B cell (primary cell): ENCODE measurements at regions of chr7 and their contacts with region 1.

Region 1: GRCh38 chr7:4681886-4682620 is at the start of gene FOXK1:
- DNase-seq: peak; percentile 85
- ATAC-seq: peak; percentile 81
- H3K4me3 ChIP-seq: peak within 1 kb of the TSS; percentile 19 to 81 (median 74)
- H3K4me3 Mint-ChIP-seq: peak within 1 kb of the TSS; percentile 89
- H3K27ac ChIP-seq: peak within 1 kb of the TSS; percentile 91 to 95
- H3K27ac Mint-ChIP-seq: peak within 1 kb of the TSS; percentile 92
- H3K4me1 ChIP-seq: peaks cover 12 to 36% of the 10 kb centered on the region in 2 donors
- H3K4me1 Mint-ChIP-seq: peaks cover 28% of the 10 kb centered on the region
- H3K27me3 ChIP-seq: peaks cover 0 to 2% (median 0%) of the 10 kb centered on the region in 4 experiments
- H3K27me3 Mint-ChIP-seq: peaks cover 3% of the 10 kb centered on the region
- CTCF ChIP-seq: no peak
- total RNA-seq, gene FOXK1: 56.2 and 60.9 TPM in 2 replicates

Region 2: GRCh38 chr7:4610768-4611467 is 71.1 kb before region 1 on chr7:
- CTCF ChIA-PET with region 1: no interaction called
- POLR2A ChIA-PET with region 1: no interaction called
- intact Hi-C with region 1: loop called (anchors 1 kb)
- DNase-seq: peak; percentile 75
- ATAC-seq: peak; percentile 83
- H3K4me3 ChIP-seq: no peak overlapping the region
- H3K4me3 Mint-ChIP-seq: no peak overlapping the region
- H3K27ac ChIP-seq: no peak overlapping the region
- H3K27ac Mint-ChIP-seq: no peak overlapping the region
- H3K4me1 ChIP-seq: peaks cover 10 to 13% of the 10 kb centered on the region in 2 donors
- H3K4me1 Mint-ChIP-seq: peaks cover 12% of the 10 kb centered on the region
- H3K27me3 ChIP-seq: peaks cover 0 to 3% (median 0%) of the 10 kb centered on the region in 4 experiments
- H3K27me3 Mint-ChIP-seq: peaks cover 26% of the 10 kb centered on the region
- CTCF ChIP-seq: peak; percentile 90

Region 3: GRCh38 chr7:4641667-4642467 is 40.2 kb before region 1 on chr7:
- CTCF ChIA-PET with region 1: interaction called, 36 read pairs
- POLR2A ChIA-PET with region 1: interaction called, 37 read pairs
- intact Hi-C with region 1: loop called (anchors 1 kb)
- DNase-seq: peak; percentile 99
- ATAC-seq: peak; percentile 82
- H3K4me3 ChIP-seq: peak overlapping the region; percentile 57 to 83 (median 79)
- H3K4me3 Mint-ChIP-seq: peak overlapping the region; percentile 88
- H3K27ac ChIP-seq: peak overlapping the region; percentile 83 to 90
- H3K27ac Mint-ChIP-seq: peak overlapping the region; percentile 87
- H3K4me1 ChIP-seq: peaks cover 5 to 13% of the 10 kb centered on the region in 2 donors
- H3K4me1 Mint-ChIP-seq: peaks cover 11% of the 10 kb centered on the region
- H3K27me3 ChIP-seq: peaks cover 0 to 5% (median 0%) of the 10 kb centered on the region in 4 experiments
- H3K27me3 Mint-ChIP-seq: no peaks in the 10 kb centered on the region
- CTCF ChIP-seq: peak; percentile 44

Region 4: GRCh38 chr7:4712281-4713182 is 30.5 kb after region 1 on chr7:
- CTCF ChIA-PET with region 1: no interaction called
- POLR2A ChIA-PET with region 1: interaction called, 6 read pairs
- intact Hi-C with region 1: loop called (anchors 1 kb)
- DNase-seq: peak; percentile 25
- ATAC-seq: peak; percentile 73
- H3K4me3 ChIP-seq: peak overlapping the region in 2 of 5 experiments; percentile 0 to 38
- H3K4me3 Mint-ChIP-seq: peak overlapping the region; percentile 82
- H3K27ac ChIP-seq: peak overlapping the region; percentile 5 to 10
- H3K27ac Mint-ChIP-seq: peak overlapping the region; percentile 83
- H3K4me1 ChIP-seq: peaks cover 4 to 25% of the 10 kb centered on the region in 2 donors
- H3K4me1 Mint-ChIP-seq: peaks cover 55% of the 10 kb centered on the region
- H3K27me3 ChIP-seq: no peaks in the 10 kb centered on the region
- H3K27me3 Mint-ChIP-seq: no peaks in the 10 kb centered on the region
- CTCF ChIP-seq: no peak

Region 5: DNA sequence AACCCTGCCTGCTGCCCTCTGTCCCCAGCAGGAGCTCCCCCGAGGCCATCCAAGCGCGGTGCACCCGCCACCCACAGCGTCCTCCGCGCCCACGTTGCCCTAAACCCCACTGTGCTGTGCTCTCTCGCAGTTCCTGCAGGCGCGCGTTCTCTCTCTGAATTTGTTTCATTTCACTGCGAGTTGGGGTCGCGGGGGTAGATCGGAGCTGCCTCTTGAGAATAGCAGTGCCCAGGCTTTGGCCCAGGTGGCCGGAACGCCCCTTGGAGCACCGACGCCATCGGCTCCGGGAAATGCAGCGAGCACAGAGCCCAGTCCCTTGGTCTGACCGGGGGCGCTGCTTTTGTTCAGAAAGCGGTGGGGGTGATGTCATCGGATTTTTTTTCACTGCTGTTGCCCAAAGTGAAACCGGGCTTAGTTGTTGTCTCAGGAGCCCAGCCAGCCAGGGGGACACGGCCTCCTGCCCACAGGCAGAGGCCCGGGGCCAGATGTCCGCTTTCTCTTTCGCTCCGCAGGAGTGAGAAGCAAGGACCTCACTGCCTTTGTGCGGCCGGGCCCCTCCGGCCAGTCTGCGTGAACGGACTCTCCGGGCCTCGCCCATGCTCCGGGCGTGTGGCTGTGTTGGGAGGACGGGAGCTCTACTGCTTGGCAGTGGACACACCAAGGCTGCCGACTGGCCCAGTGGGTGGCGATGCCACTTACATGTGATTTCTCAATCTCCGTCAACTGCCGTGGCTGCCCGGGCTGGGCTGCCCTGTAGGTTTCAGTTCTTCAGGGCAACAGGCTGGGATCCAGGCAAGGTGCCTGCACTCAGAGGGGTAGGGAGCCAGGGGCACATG is 43.2 kb after region 1 on chr7:
- CTCF ChIA-PET with region 1: interaction called, 3 read pairs
- POLR2A ChIA-PET with region 1: interaction called, 9 read pairs
- intact Hi-C with region 1: loop called (anchors 1 kb)
- DNase-seq: peak; percentile 74
- ATAC-seq: peak; percentile 78
- H3K4me3 ChIP-seq: peak overlapping the region; percentile 32 to 84 (median 63)
- H3K4me3 Mint-ChIP-seq: peak overlapping the region; percentile 95
- H3K27ac ChIP-seq: peak overlapping the region; percentile 80 to 89
- H3K27ac Mint-ChIP-seq: peak overlapping the region; percentile 92
- H3K4me1 ChIP-seq: peaks cover 13 to 28% of the 10 kb centered on the region in 2 donors
- H3K4me1 Mint-ChIP-seq: peaks cover 45% of the 10 kb centered on the region
- H3K27me3 ChIP-seq: no peaks in the 10 kb centered on the region
- H3K27me3 Mint-ChIP-seq: no peaks in the 10 kb centered on the region
- CTCF ChIP-seq: no peak

Region 6: GRCh38 chr7:4753711-4754432 is 71.8 kb after region 1 on chr7:
- CTCF ChIA-PET with region 1: interaction called, 3 read pairs
- POLR2A ChIA-PET with region 1: no interaction called
- intact Hi-C with region 1: loop called (anchors 5 kb)
- DNase-seq: peak; percentile 81
- ATAC-seq: peak; percentile 91
- H3K4me3 ChIP-seq: no peak overlapping the region
- H3K4me3 Mint-ChIP-seq: no peak overlapping the region
- H3K27ac ChIP-seq: no peak overlapping the region
- H3K27ac Mint-ChIP-seq: no peak overlapping the region
- H3K4me1 ChIP-seq: peaks cover 0 to 11% of the 10 kb centered on the region in 2 donors
- H3K4me1 Mint-ChIP-seq: peaks cover 15% of the 10 kb centered on the region
- H3K27me3 ChIP-seq: no peaks in the 10 kb centered on the region
- H3K27me3 Mint-ChIP-seq: no peaks in the 10 kb centered on the region
- CTCF ChIP-seq: peak; percentile 86

Region 7: GRCh38 chr7:4775250-4775847 is 93.3 kb after region 1 on chr7 and contains the start of gene AP5Z1:
- CTCF ChIA-PET with region 1: interaction called, 3 read pairs
- POLR2A ChIA-PET with region 1: interaction called, 5 read pairs
- intact Hi-C with region 1: loop called (anchors 1 kb)
- DNase-seq: peak; percentile 98
- ATAC-seq: peak; percentile 93
- H3K4me3 ChIP-seq: peak within 1 kb of the TSS; percentile 87 to 97 (median 95)
- H3K4me3 Mint-ChIP-seq: peak within 1 kb of the TSS; percentile 97
- H3K27ac ChIP-seq: peak within 1 kb of the TSS; percentile 94 to 95
- H3K27ac Mint-ChIP-seq: peak within 1 kb of the TSS; percentile 99
- H3K4me1 ChIP-seq: peaks cover 14 to 26% of the 10 kb centered on the region in 2 donors
- H3K4me1 Mint-ChIP-seq: peaks cover 39% of the 10 kb centered on the region
- H3K27me3 ChIP-seq: no peaks in the 10 kb centered on the region
- H3K27me3 Mint-ChIP-seq: no peaks in the 10 kb centered on the region
- CTCF ChIP-seq: no peak
- total RNA-seq, gene AP5Z1: 108 and 113 TPM in 2 replicates